GM12878 (cell line): ENCODE measurements at regions of chr15 and their contacts with region 1.

Region 1: DNA sequence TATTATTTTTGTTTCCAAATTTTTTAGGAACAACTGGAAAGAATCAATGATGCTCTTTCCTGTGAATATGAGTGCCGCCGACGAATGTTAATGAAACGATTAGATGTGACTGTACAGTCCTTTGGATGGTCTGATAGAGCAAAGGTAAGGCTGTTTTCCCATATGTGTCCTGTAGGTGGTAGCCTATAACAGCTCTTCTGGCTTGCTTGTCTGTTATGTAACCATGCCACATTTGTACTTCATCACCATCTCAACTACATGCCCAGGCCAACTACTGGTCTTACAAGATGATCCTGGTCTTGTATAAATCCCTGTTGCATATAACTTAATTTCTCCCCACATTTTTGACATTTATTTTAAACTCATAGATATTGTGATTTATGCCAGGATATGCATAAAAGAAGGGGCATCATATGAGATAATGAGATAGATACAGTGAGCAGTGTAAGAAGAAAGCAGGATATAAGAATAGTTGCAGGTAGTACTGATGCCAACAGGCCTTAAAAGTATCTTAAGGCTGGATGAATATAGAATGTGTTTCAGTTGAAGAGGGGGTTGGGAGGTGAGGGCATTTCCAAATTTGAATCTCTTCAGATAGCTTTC is 20.3 kb downstream of the FAM98B start:
- DNase-seq: peak; percentile 33
- ATAC-seq: peak; percentile 99
- H3K4me3 ChIP-seq: no peak overlapping the region
- H3K27ac ChIP-seq: no peak overlapping the region
- H3K4me1 ChIP-seq: no peaks in the 10 kb centered on the region
- H3K27me3 ChIP-seq: no peaks in the 10 kb centered on the region
- CTCF ChIP-seq: peak; percentile 67 to 92 (median 74); a peak in 5 of 6 replicates
- EP300 ChIP-seq: no peak
- POLR2A ChIP-seq: no peak
- RAD21 ChIP-seq: peak; percentile 84

Region 2: GRCh38 chr15:38453971-38454695 is 20.1 kb before region 1 on chr15 and contains the start of gene FAM98B:
- CTCF ChIA-PET with region 1: interaction called, 13 read pairs
- POLR2A ChIA-PET with region 1: interaction called, 4 read pairs
- RAD21 ChIA-PET with region 1: interaction called, 7 read pairs
- SMC1A ChIA-PET with region 1: interaction called, 8 read pairs
- in situ Hi-C with region 1: no loop called
- intact Hi-C with region 1: no loop called
- DNase-seq: peak; percentile 62
- ATAC-seq: peak; percentile 93
- H3K4me3 ChIP-seq: peak within 1 kb of the TSS; percentile 84
- H3K27ac ChIP-seq: peak within 1 kb of the TSS; percentile 85
- H3K4me1 ChIP-seq: no peaks in the 10 kb centered on the region
- H3K27me3 ChIP-seq: no peaks in the 10 kb centered on the region
- CTCF ChIP-seq: no peak
- EP300 ChIP-seq: no peak; a peak in 1 of 4 replicates
- POLR2A ChIP-seq: peak; percentile 94
- RAD21 ChIP-seq: no peak
- polyA plus RNA-seq, gene FAM98B: 4.2 to 8.4 TPM

Region 3: DNA sequence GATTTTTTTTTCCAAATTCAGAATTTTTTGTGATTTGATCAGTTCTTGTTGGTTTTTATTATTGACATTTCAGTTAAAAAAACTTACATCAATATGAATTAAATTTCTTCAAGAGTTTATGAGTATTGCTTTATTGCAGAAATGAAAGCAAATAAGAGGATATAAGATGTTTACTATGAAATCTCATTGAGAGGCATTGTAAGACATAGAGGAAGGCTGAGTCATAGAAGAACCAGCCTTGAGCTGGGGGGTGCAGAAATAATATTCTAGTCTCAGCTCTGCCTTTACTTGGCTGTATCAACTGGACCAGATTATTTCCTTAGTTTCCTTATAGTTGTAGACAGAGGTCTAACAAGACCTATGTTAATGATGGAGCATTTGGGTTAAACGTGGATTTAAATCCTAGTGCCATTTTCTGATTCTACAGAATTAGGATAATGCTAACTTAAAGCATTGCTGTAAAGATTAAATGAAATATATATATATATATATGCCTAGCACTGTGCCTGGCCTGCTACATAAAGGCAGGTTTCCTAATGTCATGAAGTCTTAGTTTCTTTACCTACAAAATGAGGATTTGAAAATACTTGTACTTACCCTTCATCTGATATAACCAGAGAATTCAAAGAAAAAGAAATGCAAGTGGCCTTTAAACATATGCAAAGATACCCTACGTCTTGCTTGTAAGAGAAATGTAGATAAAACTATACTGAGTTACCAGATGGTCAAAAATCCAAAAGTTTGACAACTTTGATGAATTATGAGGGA is 13.0 kb before region 1 on chr15:
- CTCF ChIA-PET with region 1: interaction called, 11 read pairs
- POLR2A ChIA-PET with region 1: interaction called, 4 read pairs
- RAD21 ChIA-PET with region 1: interaction called, 3 read pairs
- SMC1A ChIA-PET with region 1: interaction called, 10 read pairs
- in situ Hi-C with region 1: no loop called
- intact Hi-C with region 1: no loop called
- DNase-seq: no peak
- ATAC-seq: peak; percentile 92
- H3K4me3 ChIP-seq: 0 out of 2 replicates have a peak overlapping the region, but pooled peaks have one; percentile 13
- H3K27ac ChIP-seq: peak overlapping the region; percentile 40
- H3K4me1 ChIP-seq: peaks cover 15% of the 10 kb centered on the region; the same call in 1 of the 2 replicates
- H3K27me3 ChIP-seq: no peaks in the 10 kb centered on the region
- CTCF ChIP-seq: no peak
- EP300 ChIP-seq: 0 out of 4 replicates have a peak, but pooled peaks of 1 of the 2 experiments have one; percentile 36
- POLR2A ChIP-seq: no peak
- RAD21 ChIP-seq: no peak

Region 4: DNA sequence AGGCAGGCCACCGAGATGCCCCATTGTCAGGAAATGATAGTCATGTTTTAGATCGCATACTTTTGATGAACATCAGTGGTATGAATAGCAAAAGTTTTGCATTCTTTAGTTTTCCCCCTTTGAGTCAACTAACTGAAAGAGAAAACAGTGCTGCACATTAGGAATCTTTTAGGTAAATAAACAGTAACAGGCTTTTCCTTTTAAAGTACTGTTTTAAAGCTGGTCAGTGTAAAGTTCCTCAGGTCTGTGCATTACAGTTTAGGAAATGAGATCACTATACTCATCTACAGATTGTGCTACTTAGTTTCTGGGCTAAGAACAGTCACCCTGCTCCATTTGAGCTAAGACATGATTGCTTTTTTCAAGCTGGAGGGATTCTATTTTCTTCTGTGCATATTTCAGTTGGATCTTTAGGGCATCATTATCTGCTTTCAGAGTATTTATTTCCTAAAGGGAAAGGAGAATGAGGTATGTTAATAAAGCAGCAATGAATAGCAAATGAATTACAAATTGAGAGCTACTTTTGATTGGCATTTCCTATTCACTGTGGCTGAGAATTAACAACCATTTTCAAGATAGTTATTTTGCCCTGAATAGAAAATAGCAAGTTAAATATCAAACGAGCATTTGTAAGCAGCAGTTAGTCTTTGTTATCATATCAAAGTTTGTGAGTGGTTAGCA is 16.1 kb after region 1 on chr15:
- CTCF ChIA-PET with region 1: interaction called, 11 read pairs
- POLR2A ChIA-PET with region 1: no interaction called
- RAD21 ChIA-PET with region 1: interaction called, 3 read pairs
- SMC1A ChIA-PET with region 1: interaction called, 9 read pairs
- in situ Hi-C with region 1: no loop called
- intact Hi-C with region 1: no loop called
- DNase-seq: no peak
- ATAC-seq: no peak
- H3K4me3 ChIP-seq: no peak overlapping the region
- H3K27ac ChIP-seq: no peak overlapping the region
- H3K4me1 ChIP-seq: no peaks in the 10 kb centered on the region
- H3K27me3 ChIP-seq: no peaks in the 10 kb centered on the region
- CTCF ChIP-seq: no peak
- EP300 ChIP-seq: no peak
- POLR2A ChIP-seq: no peak
- RAD21 ChIP-seq: no peak

Region 5: DNA sequence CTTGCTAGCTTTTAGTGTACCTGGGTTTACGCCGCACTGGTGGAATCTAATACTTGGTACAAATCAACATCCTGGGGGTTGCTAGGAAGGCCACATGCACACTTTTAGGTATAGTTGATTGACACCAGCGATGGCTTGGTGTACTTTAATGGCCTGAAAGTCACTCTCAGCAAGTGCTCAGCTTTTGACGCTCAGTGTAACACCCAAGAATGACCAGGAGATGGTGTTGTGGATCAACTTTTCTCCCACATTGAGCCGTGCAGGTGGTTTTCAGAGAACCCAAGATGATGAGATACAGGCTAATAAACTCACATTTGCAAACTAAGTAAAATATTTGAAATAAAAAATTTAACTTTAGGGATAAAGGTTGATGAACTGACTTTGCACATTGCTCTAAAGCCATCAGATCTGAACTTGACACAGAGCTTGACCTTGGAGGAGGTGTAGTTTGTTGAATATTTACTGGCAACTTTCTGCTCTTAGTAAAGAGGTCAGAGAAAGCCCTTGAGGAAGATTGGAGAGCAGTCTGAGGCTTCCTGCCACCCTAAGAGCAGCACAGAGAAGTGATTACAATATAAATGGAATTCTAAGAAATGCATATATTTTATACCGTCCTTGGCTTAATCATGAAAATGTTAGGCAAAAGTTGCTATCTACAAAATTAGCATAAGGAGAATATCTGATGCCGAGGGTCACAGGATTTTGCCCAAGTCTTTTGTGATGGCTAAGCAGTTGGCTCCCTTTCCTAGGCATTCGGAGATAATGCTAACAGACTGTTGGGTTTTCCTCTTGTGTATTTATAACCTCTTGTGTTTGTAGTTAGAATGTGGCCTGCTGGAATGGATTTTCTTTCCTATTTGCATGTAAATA is 233.8 kb after region 1 on chr15:
- CTCF ChIA-PET with region 1: interaction called, 141 read pairs
- POLR2A ChIA-PET with region 1: no interaction called
- RAD21 ChIA-PET with region 1: no interaction called
- SMC1A ChIA-PET with region 1: interaction called, 138 read pairs
- in situ Hi-C with region 1: no loop called
- intact Hi-C with region 1: no loop called
- DNase-seq: no peak
- ATAC-seq: peak; percentile 98
- H3K4me3 ChIP-seq: no peak overlapping the region
- H3K27ac ChIP-seq: no peak overlapping the region
- H3K4me1 ChIP-seq: no peaks in the 10 kb centered on the region
- H3K27me3 ChIP-seq: no peaks in the 10 kb centered on the region
- CTCF ChIP-seq: peak; percentile 75 to 82 (median 76)
- EP300 ChIP-seq: no peak
- POLR2A ChIP-seq: no peak
- RAD21 ChIP-seq: peak; percentile 91